ENCODE measurements at regions of chr3 and their contacts with region 1.

Region 1: GRCh38 chr3:112437146-112438022 is 61.9 kb downstream of the BTLA start:
- DNase-seq: no peak
- H3K4me3 ChIP-seq: no peak overlapping the region
- H3K27ac ChIP-seq: no peak overlapping the region
- H3K4me1 ChIP-seq: no peaks in the 10 kb centered on the region
- H3K27me3 ChIP-seq: no peaks in the 10 kb centered on the region
- CTCF ChIP-seq: peak in 2 of 3 experiments; percentile 73 to 77; a peak in 3 of 4 replicates
- EP300 ChIP-seq: no peak
- POLR2A ChIP-seq: no peak
- RAD21 ChIP-seq: peak; percentile 83 to 89

Region 2: DNA sequence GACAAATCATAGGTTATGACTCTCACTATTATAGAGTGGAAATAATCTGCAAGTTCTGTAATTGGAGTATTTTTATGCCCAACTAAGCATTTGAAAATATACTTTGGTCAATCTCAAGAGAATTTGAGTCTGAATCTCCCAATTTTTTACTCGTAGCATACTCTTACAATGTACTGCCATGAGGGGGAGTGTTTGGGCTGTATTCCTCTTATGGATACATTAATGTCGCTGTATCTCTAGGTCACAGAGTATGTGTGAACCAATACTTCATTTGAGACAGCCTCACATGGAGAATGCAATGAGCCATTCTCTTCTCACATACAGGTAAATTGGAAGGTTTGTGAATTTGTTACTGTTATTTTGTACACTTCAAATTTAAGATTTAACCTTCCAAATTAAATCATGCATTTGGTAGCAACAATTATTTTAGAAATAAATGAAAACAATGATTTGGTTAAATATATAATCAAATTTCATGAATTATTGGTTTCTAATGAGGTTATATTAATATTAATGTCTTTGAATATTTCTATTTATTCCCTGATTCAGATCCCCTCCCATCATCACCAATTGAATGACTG is 109.9 kb before region 1 on chr3:
- CTCF ChIA-PET with region 1: interaction called, 15 read pairs
- POLR2A ChIA-PET with region 1: interaction called, 3 read pairs
- DNase-seq: no peak
- H3K4me3 ChIP-seq: no peak overlapping the region
- H3K27ac ChIP-seq: no peak overlapping the region
- H3K4me1 ChIP-seq: peaks cover 0 to 3% (median under 1%) of the 10 kb centered on the region in 4 experiments; a peak in 1 of 7 replicates
- H3K27me3 ChIP-seq: no peaks in the 10 kb centered on the region
- CTCF ChIP-seq: peak in 2 of 3 experiments; percentile 55 to 57; a peak in 2 of 4 replicates
- EP300 ChIP-seq: no peak
- POLR2A ChIP-seq: no peak
- RAD21 ChIP-seq: peak; percentile 83 to 91

Region 3: GRCh38 chr3:112357930-112358780 is 79.2 kb before region 1 on chr3:
- CTCF ChIA-PET with region 1: interaction called, 14 read pairs
- POLR2A ChIA-PET with region 1: no interaction called
- DNase-seq: no peak
- H3K4me3 ChIP-seq: no peak overlapping the region
- H3K27ac ChIP-seq: no peak overlapping the region
- H3K4me1 ChIP-seq: peaks cover 2 to 23% (median 14%) of the 10 kb centered on the region in 4 experiments
- H3K27me3 ChIP-seq: no peaks in the 10 kb centered on the region
- CTCF ChIP-seq: no peak
- EP300 ChIP-seq: no peak
- POLR2A ChIP-seq: no peak
- RAD21 ChIP-seq: no peak

Measured in H1 (cell line).